ENCODE measurements at regions of chr5 and their contacts with region 1.

Region 1: GRCh38 chr5:128154943-128155342 is 71.4 kb downstream of the SLC12A2 start:
- DNase-seq: no peak
- H3K4me3 ChIP-seq: no peak overlapping the region
- H3K4me3 Mint-ChIP-seq: no peak overlapping the region
- H3K27ac Mint-ChIP-seq: no peak overlapping the region
- H3K4me1 ChIP-seq: peaks cover 27% of the 10 kb centered on the region
- H3K4me1 Mint-ChIP-seq: peaks cover 2% of the 10 kb centered on the region
- H3K27me3 ChIP-seq: no peaks in the 10 kb centered on the region
- H3K27me3 Mint-ChIP-seq: no peaks in the 10 kb centered on the region
- CTCF ChIP-seq: no peak

Region 2: GRCh38 chr5:128101676-128102075 is 53.3 kb before region 1 on chr5:
- CTCF ChIA-PET with region 1: no interaction called
- POLR2A ChIA-PET with region 1: no interaction called
- intact Hi-C with region 1: no loop called
- DNase-seq: no peak
- H3K4me3 ChIP-seq: no peak overlapping the region
- H3K4me3 Mint-ChIP-seq: no peak overlapping the region
- H3K27ac Mint-ChIP-seq: no peak overlapping the region
- H3K4me1 ChIP-seq: no peaks in the 10 kb centered on the region
- H3K4me1 Mint-ChIP-seq: peaks cover 20% of the 10 kb centered on the region
- H3K27me3 ChIP-seq: no peaks in the 10 kb centered on the region
- H3K27me3 Mint-ChIP-seq: no peaks in the 10 kb centered on the region
- CTCF ChIP-seq: no peak

Region 3: DNA sequence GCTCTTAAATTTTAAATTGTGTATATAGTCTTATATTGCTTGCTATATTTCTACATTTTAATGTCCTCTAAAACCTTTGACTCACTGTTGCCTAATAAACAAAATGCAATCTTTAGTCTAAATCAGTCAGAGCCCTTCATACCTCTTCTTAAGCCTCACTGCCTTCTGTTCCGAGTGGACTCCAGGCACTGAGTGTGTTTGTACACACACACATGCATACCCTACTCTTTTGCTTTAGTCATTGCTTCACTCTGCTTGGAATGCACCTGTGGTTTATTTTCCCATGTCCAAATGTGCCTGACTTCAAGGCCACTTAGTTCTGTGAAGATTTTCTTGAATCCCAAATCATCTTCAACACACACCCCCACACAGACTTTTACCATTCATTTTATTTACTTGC is 10.5 kb before region 1 on chr5:
- CTCF ChIA-PET with region 1: no interaction called
- POLR2A ChIA-PET with region 1: no interaction called
- intact Hi-C with region 1: loop called (anchors 2 kb)
- DNase-seq: no peak
- H3K4me3 ChIP-seq: no peak overlapping the region
- H3K4me3 Mint-ChIP-seq: no peak overlapping the region
- H3K27ac Mint-ChIP-seq: no peak overlapping the region
- H3K4me1 ChIP-seq: peaks cover 16% of the 10 kb centered on the region
- H3K4me1 Mint-ChIP-seq: peaks cover 15% of the 10 kb centered on the region
- H3K27me3 ChIP-seq: no peaks in the 10 kb centered on the region
- H3K27me3 Mint-ChIP-seq: no peaks in the 10 kb centered on the region
- CTCF ChIP-seq: no peak

Measured in Caco-2 (cell line).